ENCODE measurements at regions of chr2 and their contacts with region 1.

Region 1: GRCh38 chr2:219119422-219120043 is 41.1 kb downstream of the NHEJ1 start:
- DNase-seq: peak; percentile 65
- CTCF ChIP-seq: peak; percentile 78

Region 2: DNA sequence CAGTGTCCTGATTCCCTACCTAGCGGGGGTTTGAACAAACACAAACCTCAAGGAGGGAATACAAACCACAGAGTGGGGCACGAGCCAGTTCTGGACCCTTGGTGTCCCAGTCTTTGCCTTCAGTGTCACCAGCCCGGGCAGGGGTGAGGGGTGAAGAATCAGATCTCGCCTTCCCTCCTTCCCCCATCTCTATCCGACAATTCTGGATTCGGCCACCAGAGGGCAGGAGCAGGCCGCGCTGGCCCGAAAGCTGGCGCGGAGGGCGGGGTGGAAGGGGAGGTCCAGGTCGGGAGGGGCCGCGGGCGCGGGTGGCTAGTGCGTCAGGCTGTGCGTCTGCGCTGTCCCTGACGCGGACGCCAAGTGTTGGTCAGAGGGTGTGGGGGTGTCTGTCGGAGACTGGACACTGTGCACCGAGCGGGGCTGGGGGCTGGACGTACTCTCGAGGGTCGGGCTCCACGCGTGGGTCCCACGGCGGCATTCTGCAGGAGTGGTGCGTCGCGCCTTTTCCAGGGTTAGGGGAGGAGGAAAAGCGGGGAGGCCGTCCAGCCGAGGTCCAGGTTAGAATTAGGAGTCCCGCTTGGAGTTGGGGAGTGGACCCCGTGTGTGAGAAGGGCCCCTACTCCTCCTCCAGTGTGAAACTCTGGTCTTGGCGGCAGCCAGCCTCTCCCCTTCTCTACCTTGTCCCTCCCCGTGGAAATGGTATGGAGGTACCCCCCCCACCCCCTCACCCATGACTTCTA is 123.4 kb before region 1 on chr2:
- CTCF ChIA-PET with region 1: interaction called, 27 read pairs
- POLR2A ChIA-PET with region 1: no interaction called
- DNase-seq: peak; percentile 88
- CTCF ChIP-seq: peak; percentile 92

Region 3: DNA sequence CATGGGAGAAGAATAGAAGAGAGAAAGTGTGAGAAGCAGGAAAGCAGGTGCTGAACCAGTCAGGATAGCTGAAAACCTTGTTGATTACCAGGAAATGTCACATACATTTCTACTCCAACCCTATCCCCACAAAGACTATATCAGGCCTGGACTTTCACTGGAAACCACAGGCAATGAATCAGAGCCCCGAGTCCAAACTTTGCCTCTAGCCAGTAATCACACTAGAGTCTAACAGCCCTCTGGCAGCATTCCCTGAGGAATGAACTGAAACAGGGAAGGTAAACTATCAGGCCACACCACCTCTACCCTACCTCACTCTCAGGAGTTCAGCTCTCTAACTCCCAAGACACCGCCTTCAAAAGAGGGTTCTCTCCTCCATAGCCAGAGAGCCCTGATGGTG is 40.1 kb before region 1 on chr2:
- CTCF ChIA-PET with region 1: interaction called, 208 read pairs
- POLR2A ChIA-PET with region 1: no interaction called
- DNase-seq: no peak
- CTCF ChIP-seq: no peak

Region 4: GRCh38 chr2:219104107-219105035 is 15.2 kb before region 1 on chr2:
- CTCF ChIA-PET with region 1: interaction called, 77 read pairs
- POLR2A ChIA-PET with region 1: no interaction called
- DNase-seq: peak; percentile 69
- CTCF ChIP-seq: peak; percentile 31

Region 5: GRCh38 chr2:219155054-219155644 is 35.6 kb after region 1 on chr2:
- CTCF ChIA-PET with region 1: interaction called, 27 read pairs
- POLR2A ChIA-PET with region 1: no interaction called
- DNase-seq: peak; percentile 64
- CTCF ChIP-seq: peak; percentile 49

Measured in GM10248 (cell line).